ENCODE measurements at regions of chr5 and their contacts with region 1.

Region 1: DNA sequence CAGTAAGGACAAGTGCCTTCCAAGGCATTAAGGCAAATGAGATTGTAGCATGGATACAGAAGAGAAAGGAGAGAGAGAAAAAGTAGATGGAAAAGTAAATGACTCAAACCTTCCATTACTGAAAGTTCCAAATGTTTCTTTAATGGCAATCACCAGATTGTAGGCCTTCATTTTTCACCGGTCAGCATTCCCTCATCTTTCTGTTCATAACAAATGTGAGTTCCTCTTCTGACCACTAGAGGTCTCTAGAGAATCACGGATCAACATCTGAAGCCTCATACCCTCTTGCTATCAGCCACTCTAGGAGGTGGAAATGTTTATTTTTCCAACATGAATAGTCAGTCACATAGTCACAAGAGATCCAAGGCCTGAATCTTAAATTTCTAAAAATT is 73.6 kb upstream of the RPS23 start:
- DNase-seq: no peak
- H3K4me3 ChIP-seq: no peak overlapping the region
- H3K27ac ChIP-seq: peak overlapping the region in 5 of 8 donors; percentile 7 to 34 (median 16)
- H3K4me1 ChIP-seq: peaks cover 5 to 26% (median 11%) of the 10 kb centered on the region in 6 donors
- H3K27me3 ChIP-seq: no peaks in the 10 kb centered on the region
- CTCF ChIP-seq: peak; percentile 55 to 85 (median 74)
- POLR2A ChIP-seq: no peak

Region 2: GRCh38 chr5:81768667-81769452 is 582.9 kb before region 1 on chr5:
- intact Hi-C with region 1: no loop called
- DNase-seq: no peak
- H3K4me3 ChIP-seq: no peak overlapping the region
- H3K27ac ChIP-seq: no peak overlapping the region
- H3K4me1 ChIP-seq: no peaks in the 10 kb centered on the region
- H3K27me3 ChIP-seq: no peaks in the 10 kb centered on the region
- CTCF ChIP-seq: no peak
- POLR2A ChIP-seq: no peak

Region 3: GRCh38 chr5:82447913-82448312 is 96.2 kb after region 1 on chr5:
- intact Hi-C with region 1: no loop called
- DNase-seq: no peak
- H3K4me3 ChIP-seq: no peak overlapping the region
- H3K27ac ChIP-seq: no peak overlapping the region
- H3K4me1 ChIP-seq: no peaks in the 10 kb centered on the region
- H3K27me3 ChIP-seq: no peaks in the 10 kb centered on the region
- CTCF ChIP-seq: no peak
- POLR2A ChIP-seq: no peak

Region 4: DNA sequence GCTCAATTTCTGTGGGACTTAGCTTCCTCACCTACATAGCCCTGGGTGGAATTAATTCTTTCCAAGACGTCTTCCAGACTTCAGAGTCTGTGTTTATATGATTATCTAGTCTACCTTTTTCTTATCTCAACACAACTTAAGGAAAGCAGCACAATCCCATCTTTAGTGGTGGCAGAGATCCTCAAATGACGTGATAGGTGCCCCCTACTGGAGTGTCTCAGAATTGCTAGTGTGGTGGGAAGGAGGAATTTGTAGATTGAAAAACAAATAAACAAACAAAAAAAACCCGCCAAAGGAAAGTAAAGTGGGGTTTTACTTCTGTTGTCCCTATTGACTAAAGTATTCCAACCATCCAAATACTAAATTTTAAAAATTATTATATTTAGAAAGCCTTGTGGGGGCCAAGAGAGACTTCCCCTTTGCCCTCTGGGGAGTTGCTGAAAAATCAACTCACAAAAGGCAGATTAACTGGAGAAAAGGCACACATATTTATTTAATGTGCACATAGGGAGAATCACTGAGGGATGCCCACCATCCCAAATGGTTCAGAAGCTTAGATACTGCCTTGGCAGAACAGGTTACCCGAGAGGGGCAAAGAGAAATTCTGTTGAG is 442.2 kb after region 1 on chr5:
- intact Hi-C with region 1: loop called (anchors 5 kb)
- DNase-seq: no peak
- H3K4me3 ChIP-seq: no peak overlapping the region
- H3K27ac ChIP-seq: no peak overlapping the region
- H3K4me1 ChIP-seq: no peaks in the 10 kb centered on the region
- H3K27me3 ChIP-seq: no peaks in the 10 kb centered on the region
- CTCF ChIP-seq: peak; percentile 6 to 68 (median 50)
- POLR2A ChIP-seq: no peak

Region 5: GRCh38 chr5:83430130-83431010 is 1078.6 kb after region 1 on chr5:
- intact Hi-C with region 1: loop called (anchors 10 kb)
- DNase-seq: peak; percentile 76
- H3K4me3 ChIP-seq: no peak overlapping the region
- H3K27ac ChIP-seq: no peak overlapping the region
- H3K4me1 ChIP-seq: peaks cover 0 to 4% (median 0%) of the 10 kb centered on the region in 6 donors
- H3K27me3 ChIP-seq: no peaks in the 10 kb centered on the region
- CTCF ChIP-seq: peak; percentile 34 to 90 (median 73)
- POLR2A ChIP-seq: no peak

Measured in spleen (tissue), 13 donors.